ENCODE measurements at regions of chr3 and their contacts with region 1.

Region 1: GRCh38 chr3:88219138-88219792 is 69.5 kb downstream of the C3orf38 start:
- DNase-seq: peak in 3 of 5 donors; percentile 9 to 26 (median 26)
- ATAC-seq: peak in 2 of 4 donors; percentile 52 to 73
- H3K4me3 ChIP-seq: no peak overlapping the region
- H3K27ac ChIP-seq: no peak overlapping the region
- H3K4me1 ChIP-seq: no peaks in the 10 kb centered on the region
- H3K27me3 ChIP-seq: no peaks in the 10 kb centered on the region
- CTCF ChIP-seq: peak; percentile 15 to 62 (median 38)
- POLR2A ChIP-seq: no peak

Region 2: DNA sequence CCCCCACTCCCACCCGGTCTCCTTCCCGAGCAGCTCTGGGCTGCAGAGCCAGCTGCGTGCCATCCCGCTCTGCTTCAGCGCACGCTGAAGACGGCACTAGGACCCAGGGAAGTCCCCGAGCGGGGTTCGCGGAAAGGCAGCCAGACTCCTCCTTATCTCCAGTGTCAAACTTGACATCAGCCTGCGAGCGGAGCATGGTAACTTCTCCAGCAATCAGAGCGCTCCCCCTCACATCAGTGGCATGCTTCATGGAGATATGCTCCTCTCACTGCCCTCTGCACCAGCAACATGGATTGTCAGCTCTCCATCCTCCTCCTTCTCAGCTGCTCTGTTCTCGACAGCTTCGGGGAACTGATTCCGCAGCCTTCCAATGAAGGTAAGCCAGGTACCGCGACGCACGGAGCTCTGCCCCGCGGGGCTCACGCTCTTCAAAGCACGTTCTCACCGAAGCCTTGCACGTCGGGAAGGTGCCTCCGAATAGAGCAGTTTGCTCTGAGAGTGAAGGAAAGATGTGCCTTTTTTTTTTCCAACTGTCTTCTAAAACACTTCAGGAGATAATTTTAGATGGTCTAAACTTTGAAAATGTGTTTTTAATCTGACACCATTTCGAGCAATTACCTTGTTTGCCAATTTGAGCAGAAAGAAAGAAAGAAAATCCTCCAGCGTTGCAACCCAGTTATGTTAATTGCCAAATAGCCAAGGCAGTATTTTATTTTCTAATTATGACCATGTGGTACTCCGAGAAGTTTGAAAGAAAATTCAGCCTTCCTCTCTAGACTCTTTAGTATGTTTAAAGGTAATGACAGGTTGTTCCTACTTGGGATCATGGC is 888.4 kb after region 1 on chr3 and contains the start of gene EPHA3:
- intact Hi-C with region 1: loop called in 3 of 10 experiments (anchors 10 kb)
- DNase-seq: peak; percentile 72 to 84 (median 82)
- ATAC-seq: peak; percentile 73 to 97 (median 94)
- H3K4me3 ChIP-seq: peak within 1 kb of the TSS; percentile 34 to 71 (median 58)
- H3K27ac ChIP-seq: peak within 1 kb of the TSS in 8 of 12 donors; percentile 12 to 60 (median 25)
- H3K4me1 ChIP-seq: peaks cover 0 to 14% (median 0%) of the 10 kb centered on the region in 12 donors
- H3K27me3 ChIP-seq: peaks cover 0 to 18% (median 0%) of the 10 kb centered on the region in 9 donors
- CTCF ChIP-seq: no peak
- POLR2A ChIP-seq: peak in 1 of 2 donors; percentile 35
- total RNA-seq, gene EPHA3: 2.2 to 9.4 (median 4.4) TPM

Region 3: GRCh38 chr3:90091204-90091924 is 1872.1 kb after region 1 on chr3:
- intact Hi-C with region 1: loop called in 1 of 10 experiments (anchors 5 kb)
- DNase-seq: peak in 3 of 5 donors; percentile 19 to 26 (median 21)
- ATAC-seq: peak; percentile 58 to 76 (median 72)
- H3K4me3 ChIP-seq: peak overlapping the region in 1 of 12 donors; percentile 22
- H3K27ac ChIP-seq: no peak overlapping the region
- H3K4me1 ChIP-seq: peaks cover 0 to 5% (median 0%) of the 10 kb centered on the region in 12 donors
- H3K27me3 ChIP-seq: no peaks in the 10 kb centered on the region
- CTCF ChIP-seq: peak; percentile 27 to 69 (median 46)
- POLR2A ChIP-seq: no peak

Region 4: DNA sequence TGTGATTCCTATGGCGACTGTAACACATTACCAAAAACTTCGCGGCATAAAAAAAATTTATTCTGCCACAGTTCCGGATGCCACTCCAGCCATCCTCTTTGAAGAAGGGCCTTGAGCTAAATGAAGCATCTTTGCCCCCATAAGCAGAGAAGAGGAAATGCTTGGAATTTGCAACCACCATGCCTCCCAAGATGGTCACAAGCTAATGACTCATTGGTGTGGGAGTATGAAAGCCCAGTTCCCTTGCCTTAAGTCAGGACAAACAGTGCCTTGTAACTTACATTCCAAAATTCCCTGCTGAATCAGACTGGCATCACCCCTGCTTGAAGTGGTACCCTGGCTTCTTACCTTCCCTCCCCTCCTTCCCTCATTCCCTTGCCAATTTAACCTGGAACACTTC is 1965.6 kb after region 1 on chr3:
- intact Hi-C with region 1: loop called in 1 of 10 experiments (anchors 5 kb)
- DNase-seq: no peak
- ATAC-seq: no peak
- H3K4me3 ChIP-seq: no peak overlapping the region
- H3K27ac ChIP-seq: no peak overlapping the region
- H3K4me1 ChIP-seq: no peaks in the 10 kb centered on the region
- H3K27me3 ChIP-seq: peaks cover 0 to 4% (median 0%) of the 10 kb centered on the region in 9 donors
- CTCF ChIP-seq: no peak
- POLR2A ChIP-seq: no peak

Measured in heart left ventricle (tissue), 16 donors.